Right ventricle myocardium superior (tissue), 1 donor: ENCODE measurements at regions of chr4 and their contacts with region 1.

Region 1: GRCh38 chr4:88341227-88342192 is 37.1 kb upstream of the HERC6 start:
- DNase-seq: peak; percentile 40
- ATAC-seq: peak; percentile 97

Region 2: GRCh38 chr4:88284439-88285234 is 56.9 kb before region 1 on chr4 and contains the start of gene PPM1K:
- intact Hi-C with region 1: loop called (anchors 10 kb)
- DNase-seq: peak; percentile 100
- ATAC-seq: peak; percentile 96
- total RNA-seq, gene PPM1K: 160 TPM